GM12878 (cell line): ENCODE measurements at regions of chr3 and their contacts with region 1.

Region 1: DNA sequence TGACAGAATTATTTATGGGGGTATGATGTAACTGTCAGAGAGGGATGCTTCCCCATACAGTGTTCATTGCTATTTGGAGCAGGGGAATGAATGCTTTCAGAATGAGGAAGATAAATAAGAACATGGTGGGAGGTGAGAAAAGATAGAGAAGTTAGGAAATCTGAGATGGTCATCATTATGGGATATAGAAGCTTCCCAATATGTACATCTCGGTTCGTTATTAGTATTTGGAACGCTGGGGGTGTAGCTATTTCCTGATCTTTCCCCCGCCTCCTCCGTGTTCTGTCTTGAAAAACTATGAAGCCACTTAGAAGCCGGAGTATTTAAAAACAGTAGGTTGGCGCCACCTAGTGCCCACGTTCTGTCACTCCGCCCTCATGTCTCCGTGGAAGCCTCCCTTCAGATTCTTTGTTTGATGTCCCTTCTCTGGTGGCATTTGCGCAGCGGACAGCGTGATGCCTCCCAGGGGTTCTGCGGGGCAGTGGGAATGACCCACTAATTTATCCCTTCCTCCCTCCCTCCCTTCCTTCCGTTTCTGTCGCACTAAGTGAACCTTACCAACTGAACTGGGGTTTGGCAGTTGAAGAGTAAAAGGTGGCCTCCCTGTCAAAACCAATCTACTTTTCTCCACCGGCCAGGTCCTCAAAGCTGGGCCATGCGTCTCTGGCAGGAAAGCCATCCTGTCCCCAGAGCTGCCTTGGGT is 184.5 kb downstream of the FEZF2 start:
- DNase-seq: no peak
- ATAC-seq: peak; percentile 89
- H3K4me3 ChIP-seq: no peak overlapping the region
- H3K27ac ChIP-seq: no peak overlapping the region
- H3K4me1 ChIP-seq: no peaks in the 10 kb centered on the region
- H3K27me3 ChIP-seq: no peaks in the 10 kb centered on the region
- CTCF ChIP-seq: peak; percentile 71 to 82 (median 76)
- EP300 ChIP-seq: no peak
- POLR2A ChIP-seq: no peak
- RAD21 ChIP-seq: peak; percentile 78

Region 2: DNA sequence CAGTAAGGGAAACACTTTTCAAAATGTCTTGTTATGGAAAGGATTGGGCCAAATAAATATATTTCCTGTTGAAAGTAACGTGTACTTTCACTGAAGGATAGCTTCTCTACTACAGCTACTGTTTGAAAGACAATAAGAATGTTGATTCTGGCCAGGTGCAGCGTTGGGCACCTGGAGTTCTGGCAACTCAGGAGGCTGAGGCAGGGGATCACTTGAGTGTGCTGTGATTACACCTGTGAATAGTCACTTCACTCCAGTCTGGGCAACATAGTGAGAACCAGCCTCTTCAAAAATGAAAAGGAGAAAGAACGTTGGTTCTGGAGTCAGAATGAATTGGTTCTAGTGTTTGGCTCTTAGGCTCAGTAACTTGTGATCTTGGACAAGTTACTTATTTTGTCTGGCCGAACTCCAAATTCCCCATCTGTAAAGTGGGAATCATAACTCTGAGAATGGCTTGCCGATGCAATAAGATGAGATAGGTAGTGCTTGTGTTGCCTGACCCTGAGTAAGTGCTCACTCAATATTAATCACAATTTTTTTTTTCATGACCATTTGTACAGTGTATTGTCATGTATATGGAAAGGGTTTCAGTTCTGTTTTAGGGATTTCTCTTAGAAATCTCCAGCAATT is 316.6 kb before region 1 on chr3:
- CTCF ChIA-PET with region 1: interaction called, 11 read pairs
- POLR2A ChIA-PET with region 1: no interaction called
- RAD21 ChIA-PET with region 1: interaction called, 5 read pairs
- SMC1A ChIA-PET with region 1: interaction called, 4 read pairs
- in situ Hi-C with region 1: no loop called
- intact Hi-C with region 1: no loop called
- DNase-seq: no peak
- ATAC-seq: no peak
- H3K4me3 ChIP-seq: no peak overlapping the region
- H3K27ac ChIP-seq: no peak overlapping the region
- H3K4me1 ChIP-seq: no peaks in the 10 kb centered on the region
- H3K27me3 ChIP-seq: no peaks in the 10 kb centered on the region
- CTCF ChIP-seq: no peak
- EP300 ChIP-seq: no peak
- POLR2A ChIP-seq: no peak
- RAD21 ChIP-seq: no peak

Region 3: GRCh38 chr3:61936344-61936937 is 252.4 kb before region 1 on chr3:
- CTCF ChIA-PET with region 1: interaction called, 6 read pairs
- POLR2A ChIA-PET with region 1: no interaction called
- RAD21 ChIA-PET with region 1: interaction called, 8 read pairs
- SMC1A ChIA-PET with region 1: interaction called, 5 read pairs
- in situ Hi-C with region 1: no loop called
- intact Hi-C with region 1: loop called (anchors 5 kb)
- DNase-seq: no peak
- ATAC-seq: peak; percentile 79
- H3K4me3 ChIP-seq: no peak overlapping the region
- H3K27ac ChIP-seq: no peak overlapping the region
- H3K4me1 ChIP-seq: no peaks in the 10 kb centered on the region
- H3K27me3 ChIP-seq: no peaks in the 10 kb centered on the region
- CTCF ChIP-seq: peak; percentile 51 to 79 (median 76)
- EP300 ChIP-seq: no peak
- POLR2A ChIP-seq: no peak
- RAD21 ChIP-seq: peak; percentile 55

Region 4: GRCh38 chr3:62057339-62058047 is 131.3 kb before region 1 on chr3:
- CTCF ChIA-PET with region 1: interaction called, 24 read pairs
- POLR2A ChIA-PET with region 1: no interaction called
- RAD21 ChIA-PET with region 1: no interaction called
- SMC1A ChIA-PET with region 1: interaction called, 10 read pairs
- in situ Hi-C with region 1: no loop called
- intact Hi-C with region 1: no loop called
- DNase-seq: no peak
- ATAC-seq: peak; percentile 32
- H3K4me3 ChIP-seq: no peak overlapping the region
- H3K27ac ChIP-seq: no peak overlapping the region
- H3K4me1 ChIP-seq: no peaks in the 10 kb centered on the region
- H3K27me3 ChIP-seq: peaks cover 0 to 1% of the 10 kb centered on the region in 2 experiments; a peak in 1 of 4 replicates
- CTCF ChIP-seq: no peak
- EP300 ChIP-seq: no peak
- POLR2A ChIP-seq: no peak
- RAD21 ChIP-seq: no peak

Region 5: GRCh38 chr3:62143980-62144379 is 44.9 kb before region 1 on chr3:
- CTCF ChIA-PET with region 1: interaction called, 9 read pairs
- POLR2A ChIA-PET with region 1: no interaction called
- RAD21 ChIA-PET with region 1: interaction called, 10 read pairs
- SMC1A ChIA-PET with region 1: no interaction called
- in situ Hi-C with region 1: no loop called
- intact Hi-C with region 1: no loop called
- DNase-seq: no peak
- ATAC-seq: peak; percentile 77
- H3K4me3 ChIP-seq: no peak overlapping the region
- H3K27ac ChIP-seq: no peak overlapping the region
- H3K4me1 ChIP-seq: no peaks in the 10 kb centered on the region
- H3K27me3 ChIP-seq: no peaks in the 10 kb centered on the region
- CTCF ChIP-seq: no peak
- EP300 ChIP-seq: no peak
- POLR2A ChIP-seq: no peak
- RAD21 ChIP-seq: no peak